Psoas muscle (tissue), 8 donors: ENCODE measurements at regions of chr4 and their contacts with region 1.

Region 1: DNA sequence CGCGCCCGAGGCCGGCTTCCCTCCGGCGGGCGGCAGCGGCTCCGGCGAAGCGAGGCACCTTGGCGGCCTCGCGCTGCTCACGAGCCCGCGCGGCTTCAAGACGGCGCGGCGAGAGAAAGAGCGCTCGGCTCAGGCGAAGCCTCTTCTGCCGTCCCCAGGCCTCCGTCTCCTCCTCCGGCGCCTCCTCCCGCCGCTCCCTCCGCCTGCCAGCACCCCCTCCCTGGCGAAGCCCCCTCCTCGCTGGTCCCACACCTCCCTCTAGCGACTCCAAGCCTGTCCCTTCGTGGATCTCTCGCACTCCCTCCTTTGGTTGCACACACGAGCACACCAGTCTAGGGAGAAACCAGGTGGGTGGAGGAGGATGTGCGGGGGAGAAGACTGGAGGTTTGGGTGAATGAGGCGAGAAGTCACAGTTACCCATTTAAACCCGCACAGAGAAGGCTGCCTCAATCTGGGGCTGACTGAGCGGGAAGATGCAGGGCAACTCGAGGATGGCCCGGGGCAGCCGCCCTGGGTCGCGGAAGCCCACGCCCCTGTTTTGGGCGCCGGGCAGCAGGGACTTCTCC is at the start of gene CAMK2D:
- DNase-seq: peak; percentile 74 to 93
- ATAC-seq: peak; percentile 83 to 85 (median 84)
- H3K4me3 ChIP-seq: peak within 1 kb of the TSS; percentile 88
- H3K27ac ChIP-seq: peak within 1 kb of the TSS; percentile 97
- H3K4me1 ChIP-seq: peaks cover 28% of the 10 kb centered on the region
- H3K27me3 ChIP-seq: no peaks in the 10 kb centered on the region
- CTCF ChIP-seq: peak; percentile 42
- total RNA-seq, gene CAMK2D: 83.8 to 183 (median 145) TPM

Region 2: DNA sequence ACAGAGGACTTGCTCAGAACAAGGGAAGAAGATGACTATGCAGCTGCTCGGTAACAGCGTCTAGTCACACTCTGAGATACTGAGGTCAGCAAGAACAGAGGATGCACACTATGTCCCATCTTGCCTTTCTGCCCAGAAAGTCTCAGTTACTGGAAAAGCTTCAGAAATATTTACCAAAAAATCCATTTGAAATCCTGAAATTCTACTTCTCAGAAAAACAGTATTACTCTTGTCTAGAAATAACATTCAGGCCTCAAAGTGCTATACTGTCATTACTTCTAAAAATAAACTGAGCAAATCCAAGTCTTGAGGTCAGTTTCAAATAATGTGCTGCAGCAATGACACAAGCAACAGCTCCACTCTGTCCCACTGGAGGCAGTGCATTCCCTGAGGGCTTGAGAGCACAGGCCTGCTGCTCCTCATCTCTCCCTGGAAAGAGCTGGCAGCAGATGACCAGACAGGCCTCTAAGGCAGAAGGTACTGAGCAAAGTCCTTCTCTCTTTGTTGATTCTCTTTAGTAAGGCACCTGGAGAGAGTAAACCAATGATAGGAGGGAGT is 77.1 kb before region 1 on chr4:
- intact Hi-C with region 1: loop called (anchors 2 kb)
- DNase-seq: peak; percentile 62 to 83
- ATAC-seq: peak; percentile 96 to 99 (median 98)
- H3K4me3 ChIP-seq: peak overlapping the region; percentile 17
- H3K27ac ChIP-seq: peak overlapping the region; percentile 82
- H3K4me1 ChIP-seq: peaks cover 41% of the 10 kb centered on the region
- H3K27me3 ChIP-seq: no peaks in the 10 kb centered on the region
- CTCF ChIP-seq: peak; percentile 56

Region 3: GRCh38 chr4:113901994-113902787 is 140.5 kb after region 1 on chr4:
- intact Hi-C with region 1: no loop called
- DNase-seq: no peak
- ATAC-seq: no peak
- H3K4me3 ChIP-seq: no peak overlapping the region
- H3K27ac ChIP-seq: no peak overlapping the region
- H3K4me1 ChIP-seq: no peaks in the 10 kb centered on the region
- H3K27me3 ChIP-seq: no peaks in the 10 kb centered on the region
- CTCF ChIP-seq: no peak